ENCODE measurements at regions of chr9 and their contacts with region 1.

Region 1: GRCh38 chr9:125672876-125673275 is 34.1 kb downstream of the MAPKAP1 start:
- DNase-seq: no peak
- H3K4me3 ChIP-seq: no peak overlapping the region
- H3K4me3 Mint-ChIP-seq: no peak overlapping the region
- H3K27ac ChIP-seq: no peak overlapping the region
- H3K27ac Mint-ChIP-seq: no peak overlapping the region
- H3K4me1 ChIP-seq: no peaks in the 10 kb centered on the region
- H3K4me1 Mint-ChIP-seq: peaks cover 14 to 40% (median 33%) of the 10 kb centered on the region in 3 donors
- H3K27me3 ChIP-seq: no peaks in the 10 kb centered on the region
- H3K27me3 Mint-ChIP-seq: no peaks in the 10 kb centered on the region

Region 2: GRCh38 chr9:125644819-125645507 is 27.9 kb before region 1 on chr9:
- CTCF ChIA-PET with region 1: no interaction called
- POLR2A ChIA-PET with region 1: interaction called, 11 read pairs
- DNase-seq: no peak
- H3K4me3 ChIP-seq: no peak overlapping the region
- H3K4me3 Mint-ChIP-seq: peak overlapping the region in 3 of 7 donors; percentile 2 to 82 (median 12)
- H3K27ac ChIP-seq: no peak overlapping the region
- H3K27ac Mint-ChIP-seq: peak overlapping the region in 6 of 8 donors; percentile 29 to 78 (median 63)
- H3K4me1 ChIP-seq: peaks cover 18% of the 10 kb centered on the region
- H3K4me1 Mint-ChIP-seq: peaks cover 44 to 59% (median 58%) of the 10 kb centered on the region in 3 donors
- H3K27me3 ChIP-seq: no peaks in the 10 kb centered on the region
- H3K27me3 Mint-ChIP-seq: no peaks in the 10 kb centered on the region

Region 3: GRCh38 chr9:125694478-125694877 is 21.6 kb after region 1 on chr9:
- CTCF ChIA-PET with region 1: no interaction called
- POLR2A ChIA-PET with region 1: no interaction called
- DNase-seq: no peak
- H3K4me3 ChIP-seq: no peak overlapping the region
- H3K4me3 Mint-ChIP-seq: no peak overlapping the region
- H3K27ac ChIP-seq: no peak overlapping the region
- H3K27ac Mint-ChIP-seq: no peak overlapping the region
- H3K4me1 ChIP-seq: no peaks in the 10 kb centered on the region
- H3K4me1 Mint-ChIP-seq: peaks cover 27 to 58% (median 56%) of the 10 kb centered on the region in 3 donors
- H3K27me3 ChIP-seq: no peaks in the 10 kb centered on the region
- H3K27me3 Mint-ChIP-seq: no peaks in the 10 kb centered on the region